Thyroid gland (tissue), 4 donors: ENCODE measurements at regions of chr15 and their contacts with region 1.

Region 1: DNA sequence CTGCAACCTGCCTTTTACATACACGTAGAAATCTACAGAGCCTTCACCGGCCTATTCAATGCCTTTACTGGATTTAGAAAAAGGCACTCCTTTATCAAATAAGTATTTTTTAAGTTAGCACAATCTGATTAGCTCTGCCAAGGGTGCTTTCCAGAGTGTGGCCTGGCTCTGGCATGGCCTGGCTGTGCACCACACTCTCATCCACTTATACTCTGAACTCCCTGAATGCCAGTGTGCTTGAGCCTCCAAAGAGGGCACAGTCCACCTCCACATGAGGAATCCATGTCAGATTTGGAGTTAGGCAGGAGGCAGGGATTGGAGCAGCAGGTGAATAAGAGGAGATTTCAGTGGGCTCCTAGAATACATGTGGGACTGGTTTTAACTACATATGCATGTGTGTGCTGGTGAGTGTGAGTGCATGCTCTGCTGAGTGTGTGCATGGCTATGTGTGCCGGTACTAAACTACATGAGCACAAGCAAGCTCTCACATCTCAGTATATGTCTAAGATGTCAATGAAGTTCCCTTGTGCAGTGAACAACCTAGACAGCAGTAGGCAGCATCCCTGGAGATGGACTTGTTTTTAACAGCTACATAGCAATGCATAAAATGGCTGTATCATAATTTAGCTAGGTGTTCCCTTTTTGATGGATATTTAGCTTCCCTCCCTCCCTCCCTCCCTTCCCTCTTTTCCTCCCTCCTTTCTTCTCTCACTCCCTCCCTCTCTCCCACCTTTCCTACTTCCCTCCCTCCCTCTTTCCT is 17.8 kb upstream of the ZFAND6 start:
- DNase-seq: peak; percentile 68
- H3K4me3 ChIP-seq: no peak overlapping the region
- H3K27ac ChIP-seq: peak overlapping the region in 1 of 3 donors; percentile 31
- H3K4me1 ChIP-seq: peaks cover 0 to 10% of the 10 kb centered on the region in 2 donors
- H3K27me3 ChIP-seq: no peaks in the 10 kb centered on the region
- CTCF ChIP-seq: no peak
- POLR2A ChIP-seq: no peak

Region 2: DNA sequence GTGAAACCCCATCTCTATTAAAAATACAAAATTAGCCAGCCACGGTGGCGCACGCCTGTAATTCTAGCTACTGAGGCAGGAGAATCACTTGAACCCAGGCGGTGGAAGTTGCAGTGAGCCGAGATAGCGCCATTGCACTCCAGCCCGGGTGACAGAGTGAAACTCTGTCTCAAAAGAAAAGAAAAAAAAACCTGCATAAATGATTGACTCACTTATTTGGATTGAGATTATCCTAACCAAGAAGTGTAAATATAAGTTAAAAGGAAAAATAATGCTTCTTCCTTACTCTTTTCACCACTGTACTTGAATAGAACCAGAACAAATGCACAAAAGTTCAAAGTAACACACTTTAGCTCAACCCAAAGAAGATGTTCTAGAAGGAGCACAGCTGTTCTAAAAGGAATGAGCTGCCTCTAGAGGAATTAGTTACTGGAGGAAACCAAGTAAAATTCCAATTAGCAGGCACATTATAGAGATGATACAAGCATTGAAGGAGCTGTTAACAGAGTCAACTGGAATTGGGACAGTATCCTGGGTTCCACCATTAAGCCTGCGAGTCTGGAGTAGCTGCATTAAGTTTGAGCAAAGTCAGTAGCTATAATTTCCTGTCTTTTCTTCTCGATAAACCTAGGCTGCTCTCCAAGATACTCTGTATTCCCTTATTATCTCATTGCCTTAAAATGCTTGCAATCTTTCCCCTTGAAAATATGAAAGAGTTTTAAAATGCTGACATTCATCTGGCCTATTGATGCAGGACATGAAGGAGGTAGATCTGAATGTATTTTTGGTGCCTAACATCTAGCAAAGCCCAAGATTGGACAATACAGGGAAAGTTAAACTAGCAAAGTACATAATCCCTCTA is 154.4 kb before region 1 on chr15:
- intact Hi-C with region 1: loop called (anchors 10 kb)
- DNase-seq: no peak
- H3K4me3 ChIP-seq: no peak overlapping the region
- H3K27ac ChIP-seq: no peak overlapping the region
- H3K4me1 ChIP-seq: no peaks in the 10 kb centered on the region
- H3K27me3 ChIP-seq: no peaks in the 10 kb centered on the region
- CTCF ChIP-seq: no peak
- POLR2A ChIP-seq: no peak

Region 3: DNA sequence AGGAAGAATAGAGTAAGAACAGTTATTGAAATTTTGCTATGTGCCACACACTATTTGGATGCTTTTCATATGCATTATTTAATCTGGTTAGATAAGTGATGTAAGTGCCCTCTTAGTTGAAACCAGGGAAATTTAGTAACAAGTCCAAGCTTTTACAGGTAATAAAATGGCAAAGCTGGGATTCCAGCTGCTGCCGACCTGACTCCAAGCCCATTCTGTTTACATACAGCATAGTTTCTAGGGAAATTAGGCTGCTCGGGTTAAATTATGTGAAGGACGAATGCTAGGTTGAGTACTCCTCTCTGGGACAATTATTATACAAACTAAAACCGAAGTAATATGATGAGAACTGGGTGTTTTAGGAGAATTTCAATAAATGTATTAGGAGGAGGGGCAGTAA is 72.4 kb after region 1 on chr15:
- intact Hi-C with region 1: no loop called
- DNase-seq: no peak
- H3K4me3 ChIP-seq: no peak overlapping the region
- H3K27ac ChIP-seq: no peak overlapping the region
- H3K4me1 ChIP-seq: peaks cover 4 to 12% of the 10 kb centered on the region in 2 donors
- H3K27me3 ChIP-seq: no peaks in the 10 kb centered on the region
- CTCF ChIP-seq: no peak
- POLR2A ChIP-seq: no peak